Tibial artery (tissue), 4 donors: ENCODE measurements at regions of chr10 and their contacts with region 1.

Region 1: DNA sequence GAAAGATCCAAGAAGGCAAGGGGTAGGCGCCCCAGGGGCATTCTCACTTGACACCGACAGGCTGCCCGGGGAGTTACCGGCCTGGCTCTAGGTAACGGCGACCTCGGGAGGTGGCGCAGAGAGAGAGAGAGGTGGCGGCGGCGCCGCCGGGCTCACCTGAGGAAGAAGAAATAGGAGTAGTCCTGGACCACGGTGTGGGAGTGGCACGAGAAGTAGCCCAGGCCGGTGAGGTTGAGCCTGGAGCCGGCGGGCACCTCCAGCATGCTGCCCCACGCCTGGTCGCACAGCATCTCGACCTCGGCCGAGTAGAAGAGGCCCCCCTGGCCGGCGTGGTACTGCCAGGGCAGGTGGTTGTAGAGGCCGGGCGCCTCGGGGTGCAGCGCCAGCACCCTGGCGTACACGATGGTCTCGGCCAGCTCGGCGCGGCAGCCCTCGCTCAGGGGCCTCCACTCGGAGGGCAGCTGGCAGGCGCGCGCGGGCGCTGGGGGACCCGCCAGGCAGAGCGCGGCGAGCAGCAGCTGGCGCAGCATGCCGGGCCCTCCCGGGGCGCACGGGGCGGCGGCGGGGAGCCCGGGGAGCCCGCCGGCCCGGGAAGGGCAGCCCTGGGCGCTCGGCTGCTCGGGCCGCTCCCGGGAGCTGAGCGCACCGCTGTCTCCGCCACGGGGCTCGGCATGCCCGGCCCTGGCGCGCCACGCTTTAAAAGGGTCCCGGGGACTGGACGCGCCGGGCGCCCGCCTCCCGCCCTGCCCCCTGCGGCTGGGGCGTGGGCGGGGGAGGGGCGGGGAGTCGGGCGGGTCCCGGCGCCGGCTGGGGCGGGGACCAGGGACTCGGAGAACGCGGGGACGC is at the start of gene CCDC3:
- DNase-seq: peak; percentile 25 to 81
- H3K4me3 ChIP-seq: peak within 1 kb of the TSS; percentile 64 to 80
- H3K27ac ChIP-seq: peak within 1 kb of the TSS; percentile 68 to 85
- H3K4me1 ChIP-seq: peaks cover 0 to 40% (median 11%) of the 10 kb centered on the region in 4 donors
- H3K27me3 ChIP-seq: no peaks in the 10 kb centered on the region
- CTCF ChIP-seq: peak in 1 of 2 experiments; percentile 12

Region 2: DNA sequence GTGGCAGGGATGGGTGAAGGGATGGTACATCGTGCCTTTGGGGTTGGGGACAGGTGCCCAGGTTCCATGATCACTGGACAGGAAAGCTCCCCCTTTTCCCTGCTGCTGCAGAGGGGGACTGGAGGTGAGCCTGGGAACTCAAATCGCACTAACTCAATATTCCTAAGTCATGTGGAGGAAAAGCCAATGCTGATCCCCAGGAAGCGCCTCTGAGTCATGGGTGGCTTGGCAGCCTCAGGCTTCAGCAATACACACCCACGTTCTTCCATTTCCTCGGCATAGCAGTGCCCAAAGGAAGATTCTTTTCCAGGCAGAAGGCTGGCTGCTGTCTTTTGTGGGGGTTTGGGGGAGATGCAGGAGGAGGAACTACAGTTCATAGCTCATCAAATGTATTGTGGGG is 165.6 kb before region 1 on chr10:
- intact Hi-C with region 1: no loop called
- DNase-seq: peak in 1 of 2 donors; percentile 75
- H3K4me3 ChIP-seq: no peak overlapping the region
- H3K27ac ChIP-seq: no peak overlapping the region
- H3K4me1 ChIP-seq: peaks cover 0 to 23% (median 8%) of the 10 kb centered on the region in 4 donors
- H3K27me3 ChIP-seq: no peaks in the 10 kb centered on the region
- CTCF ChIP-seq: no peak

Region 3: GRCh38 chr10:12902135-12902572 is 99.1 kb before region 1 on chr10:
- intact Hi-C with region 1: loop called (anchors 5 kb)
- DNase-seq: peak in 1 of 2 donors; percentile 66
- H3K4me3 ChIP-seq: no peak overlapping the region
- H3K27ac ChIP-seq: peak overlapping the region in 1 of 2 donors; percentile 83
- H3K4me1 ChIP-seq: peaks cover 4 to 50% (median 27%) of the 10 kb centered on the region in 4 donors
- H3K27me3 ChIP-seq: no peaks in the 10 kb centered on the region
- CTCF ChIP-seq: peak; percentile 60 to 67